Right ventricle myocardium inferior (tissue), 1 donor: ENCODE measurements at regions of chrX and their contacts with region 1.

Region 1: GRCh38 chrX:152072236-152072635 is 66.1 kb downstream of the MAGEA10 start:
- DNase-seq: no peak
- ATAC-seq: no peak

Region 2: DNA sequence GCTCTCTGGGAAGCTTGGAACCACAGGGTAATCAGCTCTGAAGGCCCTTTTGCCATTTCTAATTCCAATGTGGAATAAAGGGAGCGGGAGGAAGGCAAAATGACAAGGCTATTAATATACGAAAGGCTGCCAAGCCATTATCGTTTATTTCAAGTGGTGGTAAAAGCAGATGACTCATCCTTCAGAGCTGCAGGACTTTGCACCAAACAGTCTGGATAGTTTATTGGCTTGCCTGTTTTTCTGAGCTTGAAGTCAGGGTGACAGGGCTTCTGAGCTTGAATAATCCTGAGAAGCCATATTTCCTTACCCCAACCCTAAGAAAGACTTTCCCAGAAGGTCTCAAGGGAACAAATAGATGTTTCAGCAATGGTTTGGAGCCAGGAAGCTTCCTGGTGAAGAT is 90.0 kb before region 1 on chrX:
- intact Hi-C with region 1: loop called (anchors 5 kb)
- DNase-seq: no peak
- ATAC-seq: peak; percentile 70